CD8-positive, alpha-beta T cell (primary cell): ENCODE measurements at regions of chr3 and their contacts with region 1.

Region 1: DNA sequence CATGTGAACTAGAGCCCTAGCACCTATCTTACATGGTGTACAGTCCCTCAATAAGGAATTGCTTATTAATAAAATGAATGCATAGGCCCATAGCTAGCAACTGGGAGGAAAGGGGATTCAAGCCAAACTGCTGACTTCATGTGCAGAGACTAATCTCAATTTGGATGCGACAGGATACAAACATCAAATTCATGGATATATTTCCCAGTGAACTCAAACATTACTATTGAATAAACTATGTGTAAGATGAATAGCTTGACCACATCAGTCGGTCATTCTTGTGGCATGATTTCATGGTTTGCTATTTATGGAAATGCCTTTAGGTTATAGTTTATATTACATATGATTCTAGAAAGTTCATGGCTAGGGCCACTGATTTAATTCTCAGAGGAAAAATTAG is 268.6 kb upstream of the SLITRK3 start:
- DNase-seq: no peak
- ATAC-seq: no peak
- H3K4me3 ChIP-seq: no peak overlapping the region
- H3K4me3 Mint-ChIP-seq: no peak overlapping the region
- H3K27ac ChIP-seq: no peak overlapping the region
- H3K27ac Mint-ChIP-seq: no peak overlapping the region
- H3K4me1 ChIP-seq: no peaks in the 10 kb centered on the region
- H3K4me1 Mint-ChIP-seq: no peaks in the 10 kb centered on the region
- H3K27me3 ChIP-seq: no peaks in the 10 kb centered on the region
- H3K27me3 Mint-ChIP-seq: no peaks in the 10 kb centered on the region
- CTCF ChIP-seq: no peak

Region 2: DNA sequence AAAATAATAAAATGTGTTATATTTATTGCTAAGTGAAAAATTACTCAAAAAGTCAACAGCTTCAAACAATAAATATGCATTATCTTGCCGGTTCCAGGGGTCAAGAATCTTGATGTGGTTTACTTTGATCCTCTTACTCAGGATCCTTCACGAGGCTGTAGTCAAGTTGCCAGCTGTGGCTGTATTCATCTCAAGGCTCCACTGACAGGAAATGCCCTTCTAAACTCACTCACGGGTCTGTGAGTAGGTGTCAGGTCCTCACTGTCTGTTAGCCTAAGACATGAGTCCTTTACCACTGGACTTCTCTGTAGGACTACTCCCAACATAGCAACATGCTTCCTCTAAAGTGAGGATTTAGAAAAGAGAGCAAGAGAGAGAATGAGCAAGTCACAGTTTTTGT is 1369.5 kb before region 1 on chr3:
- CTCF ChIA-PET with region 1: no interaction called
- POLR2A ChIA-PET with region 1: no interaction called
- intact Hi-C with region 1: loop called in 1 of 2 experiments (anchors 5 kb)
- DNase-seq: no peak
- ATAC-seq: no peak
- H3K4me3 ChIP-seq: no peak overlapping the region
- H3K4me3 Mint-ChIP-seq: no peak overlapping the region
- H3K27ac ChIP-seq: no peak overlapping the region
- H3K27ac Mint-ChIP-seq: no peak overlapping the region
- H3K4me1 ChIP-seq: no peaks in the 10 kb centered on the region
- H3K4me1 Mint-ChIP-seq: no peaks in the 10 kb centered on the region
- H3K27me3 ChIP-seq: no peaks in the 10 kb centered on the region
- H3K27me3 Mint-ChIP-seq: no peaks in the 10 kb centered on the region
- CTCF ChIP-seq: no peak